ENCODE measurements at regions of chr10 and their contacts with region 1.

Region 1: GRCh38 chr10:77926566-77927401 is at the start of gene DLG5:
- DNase-seq: peak in 1 of 2 donors; percentile 82
- H3K4me3 ChIP-seq: peak within 1 kb of the TSS; percentile 86 to 93
- H3K27ac ChIP-seq: peak within 1 kb of the TSS; percentile 78
- H3K4me1 ChIP-seq: peaks cover 4 to 21% of the 10 kb centered on the region in 2 donors
- H3K27me3 ChIP-seq: no peaks in the 10 kb centered on the region
- CTCF ChIP-seq: no peak
- total RNA-seq, gene DLG5: 32.9 TPM

Region 2: DNA sequence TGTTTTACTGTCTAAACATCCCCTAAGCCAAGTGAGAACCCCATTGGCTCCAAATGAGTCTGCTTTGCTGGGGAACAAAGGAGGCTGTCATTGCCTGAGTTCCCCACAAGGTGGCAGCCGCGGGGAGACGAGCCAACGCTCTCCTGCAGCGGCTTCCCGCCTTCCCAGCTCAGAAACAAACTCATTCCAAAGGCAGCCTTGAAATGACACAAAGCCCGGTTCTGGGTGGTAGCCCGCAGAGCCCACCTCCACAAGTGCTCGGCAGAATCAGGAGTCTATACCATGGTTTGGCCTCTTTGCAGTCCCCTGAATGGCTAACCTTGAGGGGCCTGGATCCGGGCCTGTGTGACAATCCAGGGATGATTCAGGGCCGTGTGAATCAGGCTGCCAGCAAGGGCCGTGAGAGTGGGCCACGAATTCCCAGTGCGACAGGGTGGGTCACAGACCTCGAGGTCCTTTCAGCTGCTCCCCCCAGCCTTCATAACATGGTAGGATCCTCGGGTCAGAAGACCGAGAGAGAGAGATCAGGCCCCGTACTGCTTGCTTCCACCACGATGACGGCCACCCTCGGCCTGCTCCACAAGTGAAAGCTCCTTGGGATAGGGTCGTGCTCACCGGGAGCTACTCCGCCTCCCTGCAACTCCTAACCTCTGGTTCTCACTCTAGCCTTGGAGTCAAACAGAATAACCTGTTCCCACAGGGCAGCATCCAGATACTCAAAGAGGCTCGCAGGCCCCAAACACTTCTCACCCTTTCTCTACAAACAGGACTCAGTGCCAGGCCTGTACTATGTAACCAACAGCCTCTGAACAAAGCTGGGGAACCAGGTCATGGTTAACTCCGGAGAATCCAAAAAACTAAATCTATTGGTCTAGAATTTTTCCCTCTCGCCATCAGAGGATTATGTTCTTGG is 79.8 kb before region 1 on chr10:
- intact Hi-C with region 1: loop called (anchors 2 kb)
- DNase-seq: peak; percentile 22 to 85
- H3K4me3 ChIP-seq: no peak overlapping the region
- H3K27ac ChIP-seq: peak overlapping the region; percentile 73 to 75
- H3K4me1 ChIP-seq: peaks cover 0 to 8% of the 10 kb centered on the region in 2 donors
- H3K27me3 ChIP-seq: no peaks in the 10 kb centered on the region
- CTCF ChIP-seq: peak; percentile 89 to 98 (median 96)

Region 3: GRCh38 chr10:77873536-77874380 is 53.0 kb before region 1 on chr10:
- intact Hi-C with region 1: no loop called
- DNase-seq: no peak
- H3K4me3 ChIP-seq: no peak overlapping the region
- H3K27ac ChIP-seq: peak overlapping the region; percentile 25 to 63
- H3K4me1 ChIP-seq: peaks cover 7 to 31% of the 10 kb centered on the region in 2 donors
- H3K27me3 ChIP-seq: no peaks in the 10 kb centered on the region
- CTCF ChIP-seq: no peak

Region 4: DNA sequence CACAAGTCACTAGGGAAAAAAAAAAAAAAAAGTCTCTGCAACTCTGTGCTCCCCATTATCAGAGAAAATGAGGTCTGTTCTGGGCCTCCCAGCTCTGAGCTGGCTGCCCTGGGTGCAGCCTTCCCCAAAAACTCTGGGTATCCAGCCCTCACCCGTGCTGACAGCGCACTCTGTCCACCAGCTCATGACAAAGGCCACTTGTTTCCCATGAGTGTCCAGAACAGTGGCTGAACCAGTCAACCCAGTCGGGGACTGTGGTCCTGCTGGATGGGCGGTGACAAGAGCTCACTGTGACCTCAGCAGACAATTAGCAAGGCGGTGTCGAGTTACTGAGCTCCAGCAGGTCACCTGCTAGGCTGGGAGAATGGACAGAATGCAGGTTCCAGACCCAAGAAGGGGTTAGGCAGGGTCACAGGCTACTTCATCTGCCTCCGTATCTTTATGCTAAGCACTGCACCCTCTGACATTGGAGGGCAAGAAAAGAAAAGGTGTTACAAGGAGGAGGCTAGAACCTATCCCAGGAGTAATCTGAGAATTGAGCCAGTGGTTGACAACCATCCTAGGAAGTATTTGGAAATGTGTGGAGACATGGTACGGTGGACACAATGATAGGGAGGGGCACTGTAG is 37.4 kb before region 1 on chr10:
- intact Hi-C with region 1: no loop called
- DNase-seq: no peak
- H3K4me3 ChIP-seq: no peak overlapping the region
- H3K27ac ChIP-seq: peak overlapping the region; percentile 73 to 78
- H3K4me1 ChIP-seq: peaks cover 6 to 45% of the 10 kb centered on the region in 2 donors
- H3K27me3 ChIP-seq: no peaks in the 10 kb centered on the region
- CTCF ChIP-seq: no peak

Region 5: DNA sequence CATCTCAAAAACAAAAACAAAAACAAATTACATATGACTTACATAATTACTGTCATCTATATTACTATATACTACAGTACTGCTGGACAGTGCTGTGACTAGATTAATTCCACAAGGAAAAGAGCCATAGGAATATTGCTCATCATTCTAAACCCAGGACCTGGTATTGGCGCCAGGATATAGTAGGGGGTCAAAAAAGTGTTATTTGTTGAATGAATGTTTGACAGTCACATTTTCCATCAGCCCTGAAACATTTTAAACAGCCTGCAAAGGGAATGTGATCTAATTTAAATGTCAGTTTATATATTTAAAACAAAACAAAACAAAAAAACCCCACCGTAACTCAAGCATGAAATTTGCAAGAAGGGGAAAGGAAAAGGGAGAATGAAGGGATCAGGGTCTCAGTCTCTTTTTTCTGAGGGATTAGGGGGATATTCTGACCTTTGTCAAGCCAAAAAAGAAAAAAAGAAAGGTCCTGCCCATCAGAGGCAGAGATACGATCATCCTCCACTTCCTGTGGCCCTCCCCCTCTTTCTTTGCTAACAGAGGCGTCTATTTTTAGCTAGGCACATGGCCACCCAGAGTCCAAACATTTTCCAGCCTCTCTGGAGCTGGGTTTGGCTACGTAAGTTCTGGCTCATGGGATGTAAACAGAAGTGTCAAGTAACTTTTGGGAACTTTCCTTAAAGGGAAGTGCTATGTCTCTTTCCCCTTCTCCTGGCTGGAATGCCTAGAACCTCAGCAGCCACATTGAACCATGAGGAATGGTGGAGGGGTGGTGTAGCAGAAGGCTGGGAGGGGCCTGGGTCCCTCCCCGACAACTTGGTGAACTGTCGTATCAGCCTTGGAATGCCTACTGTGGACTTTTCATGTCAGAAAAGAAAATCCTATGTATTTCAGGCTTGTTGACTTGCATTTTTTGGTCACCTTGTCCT is 44.4 kb after region 1 on chr10:
- intact Hi-C with region 1: loop called (anchors 2 kb)
- DNase-seq: peak; percentile 61 to 91
- H3K4me3 ChIP-seq: peak overlapping the region; percentile 27
- H3K27ac ChIP-seq: peak overlapping the region; percentile 84 to 89
- H3K4me1 ChIP-seq: peaks cover 0 to 32% of the 10 kb centered on the region in 2 donors
- H3K27me3 ChIP-seq: no peaks in the 10 kb centered on the region
- CTCF ChIP-seq: no peak

Region 6: GRCh38 chr10:78029269-78030226 is 102.8 kb after region 1 on chr10 and contains the start of gene POLR3A:
- intact Hi-C with region 1: loop called (anchors 5 kb)
- DNase-seq: peak; percentile 82 to 98
- H3K4me3 ChIP-seq: peak within 1 kb of the TSS; percentile 96
- H3K27ac ChIP-seq: peak within 1 kb of the TSS; percentile 73 to 82
- H3K4me1 ChIP-seq: peaks cover 9 to 15% of the 10 kb centered on the region in 2 donors
- H3K27me3 ChIP-seq: no peaks in the 10 kb centered on the region
- CTCF ChIP-seq: peak; percentile 58 to 79 (median 69)
- total RNA-seq, gene POLR3A: 18.6 TPM

Measured in ascending aorta (tissue), 2 donors.